OCI-LY7 (cell line): ENCODE measurements at regions of chr3 and their contacts with region 1.

Region 1: GRCh38 chr3:114290911-114291901 is 2.6 kb upstream of the TIGIT start:
- DNase-seq: peak; percentile 84
- H3K4me3 ChIP-seq: no peak overlapping the region
- H3K27ac ChIP-seq: no peak overlapping the region
- H3K4me1 ChIP-seq: peaks cover 8% of the 10 kb centered on the region
- CTCF ChIP-seq: peak; percentile 92

Region 2: DNA sequence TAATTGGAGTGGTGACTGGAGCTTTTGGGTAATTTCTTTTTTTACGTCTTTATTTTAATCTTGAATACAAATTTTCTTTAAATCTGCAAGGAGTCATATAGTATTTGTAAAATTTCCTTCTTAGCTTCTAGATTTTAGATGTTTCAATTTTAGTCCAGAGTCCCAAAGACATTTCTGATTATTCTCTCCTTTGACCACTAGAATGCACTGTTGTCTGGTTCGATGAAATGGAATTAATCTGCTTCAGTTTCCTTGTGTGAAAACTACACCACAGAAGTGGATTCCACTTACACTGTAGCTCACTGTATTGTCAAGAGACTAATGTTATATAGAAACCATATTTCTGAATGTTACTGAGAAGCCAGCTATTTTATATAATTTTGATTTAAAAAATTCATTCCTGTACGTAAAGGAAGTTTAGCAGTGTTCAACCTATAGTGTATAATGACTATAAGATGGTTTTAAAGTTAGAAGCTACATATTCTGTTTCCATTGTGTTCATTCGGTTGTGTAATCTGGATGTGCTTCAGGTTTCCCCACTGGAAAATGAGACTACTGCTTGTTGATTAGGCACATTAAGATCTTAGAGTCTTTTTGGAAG is 446.5 kb before region 1 on chr3:
- CTCF ChIA-PET with region 1: no interaction called
- POLR2A ChIA-PET with region 1: no interaction called
- intact Hi-C with region 1: loop called (anchors 10 kb)
- DNase-seq: peak; percentile 58
- H3K4me3 ChIP-seq: no peak overlapping the region
- H3K27ac ChIP-seq: no peak overlapping the region
- H3K4me1 ChIP-seq: no peaks in the 10 kb centered on the region
- CTCF ChIP-seq: peak; percentile 94

Region 3: DNA sequence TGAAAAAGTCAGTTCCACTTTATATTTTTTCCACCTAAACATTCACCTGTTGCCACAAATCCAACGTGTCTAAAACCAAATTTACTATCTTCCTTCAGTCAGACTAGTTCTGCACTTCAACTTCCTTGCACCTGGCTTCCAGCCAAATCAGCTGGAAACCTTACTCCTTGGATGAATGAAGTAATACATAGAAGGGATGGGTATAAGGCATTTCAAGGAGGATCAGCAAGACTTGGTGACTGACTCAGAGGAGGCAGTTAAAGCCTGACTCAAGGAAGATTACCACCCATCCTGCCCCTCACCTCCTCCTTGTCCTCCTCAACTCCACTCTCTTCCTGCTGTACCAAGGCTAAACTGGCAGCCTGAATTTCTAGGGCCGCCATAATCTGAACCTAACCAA is 197.6 kb before region 1 on chr3:
- CTCF ChIA-PET with region 1: no interaction called
- POLR2A ChIA-PET with region 1: no interaction called
- intact Hi-C with region 1: no loop called
- DNase-seq: no peak
- H3K4me3 ChIP-seq: no peak overlapping the region
- H3K27ac ChIP-seq: no peak overlapping the region
- H3K4me1 ChIP-seq: no peaks in the 10 kb centered on the region
- CTCF ChIP-seq: no peak

Region 4: GRCh38 chr3:114336122-114336697 is 45.0 kb after region 1 on chr3:
- CTCF ChIA-PET with region 1: no interaction called
- POLR2A ChIA-PET with region 1: interaction called, 3 read pairs
- intact Hi-C with region 1: loop called (anchors 2 kb)
- DNase-seq: peak; percentile 9
- H3K4me3 ChIP-seq: no peak overlapping the region
- H3K27ac ChIP-seq: no peak overlapping the region
- H3K4me1 ChIP-seq: peaks cover 10% of the 10 kb centered on the region
- CTCF ChIP-seq: peak; percentile 81

Region 5: DNA sequence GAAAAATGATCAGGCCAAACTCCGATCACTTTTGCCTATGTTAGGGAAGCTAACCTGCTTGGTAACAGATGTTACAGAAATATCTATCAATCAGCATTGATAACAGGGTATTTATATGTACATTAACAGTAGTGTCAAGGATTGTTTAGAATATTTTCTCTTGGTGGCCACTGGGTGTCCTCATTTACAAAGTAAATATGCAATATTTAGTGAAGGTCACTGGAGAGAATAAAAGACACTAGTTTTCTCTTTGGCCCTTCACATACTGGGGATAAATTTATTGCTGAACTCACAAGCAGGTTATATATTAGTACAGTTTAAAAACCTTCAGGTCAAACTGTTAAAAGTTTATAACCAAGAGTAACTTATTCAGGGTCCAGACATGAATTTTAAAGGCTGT is 71.6 kb after region 1 on chr3:
- CTCF ChIA-PET with region 1: no interaction called
- POLR2A ChIA-PET with region 1: no interaction called
- intact Hi-C with region 1: loop called (anchors 2 kb)
- DNase-seq: peak; percentile 25
- H3K4me3 ChIP-seq: no peak overlapping the region
- H3K27ac ChIP-seq: no peak overlapping the region
- H3K4me1 ChIP-seq: no peaks in the 10 kb centered on the region
- CTCF ChIP-seq: peak; percentile 79

Region 6: DNA sequence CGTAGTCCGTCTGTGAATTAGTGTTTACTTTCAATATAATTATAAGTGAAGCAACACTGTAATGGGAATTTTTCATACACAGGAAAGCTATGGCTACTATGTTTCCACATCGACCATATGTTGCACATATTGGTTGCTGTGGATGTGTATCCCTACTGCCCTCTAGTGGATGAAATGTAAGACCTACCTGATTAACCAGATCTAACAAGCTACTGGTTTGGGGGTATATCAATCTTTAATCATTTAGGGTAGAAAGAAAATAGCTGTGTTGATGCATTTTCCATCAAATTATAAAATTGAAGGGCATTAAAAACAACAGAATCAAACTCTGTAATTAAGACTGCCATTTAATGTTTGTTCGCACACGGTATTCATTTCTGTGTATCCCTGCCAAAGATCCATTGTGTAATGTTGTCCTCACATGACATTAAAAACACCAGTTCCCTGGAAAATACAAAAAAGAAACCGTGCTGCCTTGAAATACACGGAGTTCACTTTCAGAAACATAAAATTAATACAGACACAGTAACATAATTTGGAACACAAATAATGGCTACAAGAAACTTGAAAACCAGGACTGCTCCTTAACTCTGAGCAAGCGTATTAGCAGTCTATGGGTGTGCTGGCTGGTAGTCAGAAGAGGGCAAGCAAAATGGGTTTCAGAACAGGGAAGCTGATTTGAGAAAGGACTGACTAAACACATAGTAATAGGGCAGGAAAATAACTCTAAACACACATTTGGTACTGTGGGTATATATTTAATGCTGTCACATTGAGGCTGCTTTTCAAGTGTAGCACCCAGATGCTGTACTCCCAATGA is 127.7 kb after region 1 on chr3:
- CTCF ChIA-PET with region 1: no interaction called
- POLR2A ChIA-PET with region 1: no interaction called
- intact Hi-C with region 1: loop called (anchors 2 kb)
- DNase-seq: peak; percentile 72
- H3K4me3 ChIP-seq: no peak overlapping the region
- H3K27ac ChIP-seq: no peak overlapping the region
- H3K4me1 ChIP-seq: no peaks in the 10 kb centered on the region
- CTCF ChIP-seq: peak; percentile 95

Region 7: GRCh38 chr3:114442246-114442645 is 151.0 kb after region 1 on chr3:
- CTCF ChIA-PET with region 1: no interaction called
- POLR2A ChIA-PET with region 1: no interaction called
- intact Hi-C with region 1: no loop called
- DNase-seq: no peak
- H3K4me3 ChIP-seq: no peak overlapping the region
- H3K27ac ChIP-seq: no peak overlapping the region
- H3K4me1 ChIP-seq: no peaks in the 10 kb centered on the region
- CTCF ChIP-seq: no peak

Region 8: GRCh38 chr3:114899186-114899931 is 608.2 kb after region 1 on chr3:
- CTCF ChIA-PET with region 1: no interaction called
- POLR2A ChIA-PET with region 1: no interaction called
- intact Hi-C with region 1: no loop called
- DNase-seq: no peak
- H3K4me3 ChIP-seq: no peak overlapping the region
- H3K27ac ChIP-seq: no peak overlapping the region
- H3K4me1 ChIP-seq: no peaks in the 10 kb centered on the region
- CTCF ChIP-seq: no peak